CD14-positive monocyte (primary cell): ENCODE measurements at regions of chr1 and their contacts with region 1.

Region 1: DNA sequence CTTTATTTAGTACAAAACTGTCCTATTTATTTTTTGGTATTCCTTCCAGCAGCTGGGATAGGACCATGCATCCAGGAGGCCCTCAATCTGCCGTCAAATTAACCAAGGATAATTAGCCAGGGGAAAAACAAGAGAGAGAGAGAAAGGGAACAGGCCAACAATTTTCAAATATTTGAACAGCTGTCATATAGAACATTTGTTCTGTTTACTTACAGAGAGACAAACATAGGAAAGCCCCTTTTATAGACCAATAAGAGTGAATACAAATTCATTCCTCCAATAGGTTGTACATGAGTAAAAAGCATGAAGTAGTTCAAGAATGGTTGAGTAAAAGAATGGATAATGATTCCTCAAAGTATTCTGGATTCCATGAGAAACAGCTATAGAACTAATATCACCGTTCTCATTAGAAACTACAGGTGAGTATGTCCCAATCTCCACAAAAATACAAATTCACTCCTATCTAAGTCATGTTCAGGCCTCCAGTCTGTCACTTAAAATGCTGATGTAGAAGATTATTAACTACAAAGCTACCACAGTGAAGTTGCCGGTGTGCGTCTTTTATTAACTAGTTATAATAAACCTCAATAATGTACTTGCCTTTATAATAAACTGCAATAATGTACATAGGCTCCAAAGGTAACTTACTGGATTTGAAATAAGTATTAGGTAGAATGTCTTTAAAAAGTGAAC is 64.8 kb upstream of the GNG4 start:
- DNase-seq: no peak
- H3K4me3 ChIP-seq: no peak overlapping the region
- H3K4me3 Mint-ChIP-seq: no peak overlapping the region
- H3K27ac ChIP-seq: no peak overlapping the region
- H3K27ac Mint-ChIP-seq: peak overlapping the region in 4 of 7 donors; percentile 10 to 37 (median 28)
- H3K4me1 ChIP-seq: no peaks in the 10 kb centered on the region
- H3K4me1 Mint-ChIP-seq: no peaks in the 10 kb centered on the region
- H3K27me3 ChIP-seq: no peaks in the 10 kb centered on the region
- H3K27me3 Mint-ChIP-seq: no peaks in the 10 kb centered on the region
- CTCF ChIP-seq: no peak

Region 2: GRCh38 chr1:235683653-235684052 is 30.7 kb before region 1 on chr1:
- intact Hi-C with region 1: no loop called
- DNase-seq: no peak
- H3K4me3 ChIP-seq: no peak overlapping the region
- H3K4me3 Mint-ChIP-seq: no peak overlapping the region
- H3K27ac ChIP-seq: peak overlapping the region in 1 of 2 donors; percentile 30
- H3K27ac Mint-ChIP-seq: peak overlapping the region in 3 of 7 donors; percentile 6 to 50 (median 15)
- H3K4me1 ChIP-seq: no peaks in the 10 kb centered on the region
- H3K4me1 Mint-ChIP-seq: no peaks in the 10 kb centered on the region
- H3K27me3 ChIP-seq: no peaks in the 10 kb centered on the region
- H3K27me3 Mint-ChIP-seq: no peaks in the 10 kb centered on the region
- CTCF ChIP-seq: no peak

Region 3: GRCh38 chr1:235745503-235746136 is 31.3 kb after region 1 on chr1:
- intact Hi-C with region 1: loop called in 1 of 2 experiments (anchors 5 kb)
- DNase-seq: no peak
- H3K4me3 ChIP-seq: no peak overlapping the region
- H3K4me3 Mint-ChIP-seq: no peak overlapping the region
- H3K27ac ChIP-seq: peak overlapping the region in 1 of 2 donors; percentile 30
- H3K27ac Mint-ChIP-seq: peak overlapping the region; percentile 11 to 87 (median 71)
- H3K4me1 ChIP-seq: peaks cover 0 to 2% of the 10 kb centered on the region in 2 donors
- H3K4me1 Mint-ChIP-seq: peaks cover 12% of the 10 kb centered on the region
- H3K27me3 ChIP-seq: no peaks in the 10 kb centered on the region
- H3K27me3 Mint-ChIP-seq: peaks cover 0 to 2% (median 0%) of the 10 kb centered on the region in 3 donors
- CTCF ChIP-seq: no peak

Region 4: GRCh38 chr1:235783148-235783776 is 68.9 kb after region 1 on chr1:
- intact Hi-C with region 1: loop called in 1 of 2 experiments (anchors 10 kb)
- DNase-seq: no peak
- H3K4me3 ChIP-seq: no peak overlapping the region
- H3K4me3 Mint-ChIP-seq: no peak overlapping the region
- H3K27ac ChIP-seq: no peak overlapping the region
- H3K27ac Mint-ChIP-seq: peak overlapping the region in 2 of 7 donors; percentile 21 to 33
- H3K4me1 ChIP-seq: no peaks in the 10 kb centered on the region
- H3K4me1 Mint-ChIP-seq: no peaks in the 10 kb centered on the region
- H3K27me3 ChIP-seq: no peaks in the 10 kb centered on the region
- H3K27me3 Mint-ChIP-seq: no peaks in the 10 kb centered on the region
- CTCF ChIP-seq: peak; percentile 64

Region 5: DNA sequence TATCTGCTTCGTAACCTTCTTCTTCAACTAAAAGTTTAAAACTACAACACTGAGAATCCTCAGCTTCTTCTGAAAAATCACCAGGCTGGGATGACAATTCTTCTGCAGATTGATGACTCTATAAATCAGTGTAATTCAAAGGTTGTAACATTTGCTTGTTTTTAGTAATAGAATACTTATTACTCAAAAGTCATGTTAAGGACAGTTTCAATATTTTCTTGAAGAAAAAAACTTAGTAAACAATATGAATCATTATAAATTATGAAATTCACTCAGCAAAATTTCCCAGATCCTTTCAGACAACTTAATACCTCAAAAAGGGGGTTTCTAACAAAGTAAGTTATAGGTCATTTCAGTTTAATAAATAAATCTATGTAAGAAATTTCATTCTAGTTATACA is 88.6 kb after region 1 on chr1:
- intact Hi-C with region 1: no loop called
- DNase-seq: no peak
- H3K4me3 ChIP-seq: no peak overlapping the region
- H3K4me3 Mint-ChIP-seq: no peak overlapping the region
- H3K27ac ChIP-seq: peak overlapping the region in 1 of 2 donors; percentile 30
- H3K27ac Mint-ChIP-seq: peak overlapping the region in 1 of 7 donors; percentile 52
- H3K4me1 ChIP-seq: no peaks in the 10 kb centered on the region
- H3K4me1 Mint-ChIP-seq: no peaks in the 10 kb centered on the region
- H3K27me3 ChIP-seq: no peaks in the 10 kb centered on the region
- H3K27me3 Mint-ChIP-seq: no peaks in the 10 kb centered on the region
- CTCF ChIP-seq: no peak